ENCODE measurements at regions of chr21 and their contacts with region 1.

Region 1: GRCh38 chr21:44892536-44893277 is 19.2 kb upstream of the PTTG1IP start:
- DNase-seq: peak; percentile 81
- H3K4me3 Mint-ChIP-seq: no peak overlapping the region
- H3K27ac Mint-ChIP-seq: peak overlapping the region; percentile 44
- H3K4me1 Mint-ChIP-seq: peaks cover 12% of the 10 kb centered on the region
- H3K27me3 Mint-ChIP-seq: no peaks in the 10 kb centered on the region

Region 2: DNA sequence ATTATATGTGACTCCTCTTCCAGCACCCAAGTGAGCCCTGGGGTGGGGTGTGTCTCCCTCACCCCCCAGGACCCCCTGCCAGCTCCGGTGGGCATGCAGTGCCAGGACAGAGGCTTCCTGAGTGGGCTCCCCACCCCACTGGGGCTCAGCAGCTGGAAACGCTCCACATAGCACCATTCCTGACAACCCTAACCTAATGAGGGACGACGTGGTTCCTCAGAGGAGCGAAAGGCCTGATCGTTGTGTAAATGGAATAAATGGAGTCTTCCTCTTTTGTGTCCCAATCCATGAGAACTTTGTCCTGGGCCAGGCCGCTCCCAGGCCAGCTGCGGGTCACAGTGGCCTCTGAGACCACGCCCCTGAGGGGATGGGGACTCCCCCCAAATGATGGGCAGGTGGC is 179.6 kb before region 1 on chr21:
- CTCF ChIA-PET with region 1: no interaction called
- POLR2A ChIA-PET with region 1: no interaction called
- DNase-seq: no peak
- H3K4me3 Mint-ChIP-seq: no peak overlapping the region
- H3K27ac Mint-ChIP-seq: no peak overlapping the region
- H3K4me1 Mint-ChIP-seq: peaks cover 8% of the 10 kb centered on the region
- H3K27me3 Mint-ChIP-seq: peaks cover 76% of the 10 kb centered on the region

Region 3: DNA sequence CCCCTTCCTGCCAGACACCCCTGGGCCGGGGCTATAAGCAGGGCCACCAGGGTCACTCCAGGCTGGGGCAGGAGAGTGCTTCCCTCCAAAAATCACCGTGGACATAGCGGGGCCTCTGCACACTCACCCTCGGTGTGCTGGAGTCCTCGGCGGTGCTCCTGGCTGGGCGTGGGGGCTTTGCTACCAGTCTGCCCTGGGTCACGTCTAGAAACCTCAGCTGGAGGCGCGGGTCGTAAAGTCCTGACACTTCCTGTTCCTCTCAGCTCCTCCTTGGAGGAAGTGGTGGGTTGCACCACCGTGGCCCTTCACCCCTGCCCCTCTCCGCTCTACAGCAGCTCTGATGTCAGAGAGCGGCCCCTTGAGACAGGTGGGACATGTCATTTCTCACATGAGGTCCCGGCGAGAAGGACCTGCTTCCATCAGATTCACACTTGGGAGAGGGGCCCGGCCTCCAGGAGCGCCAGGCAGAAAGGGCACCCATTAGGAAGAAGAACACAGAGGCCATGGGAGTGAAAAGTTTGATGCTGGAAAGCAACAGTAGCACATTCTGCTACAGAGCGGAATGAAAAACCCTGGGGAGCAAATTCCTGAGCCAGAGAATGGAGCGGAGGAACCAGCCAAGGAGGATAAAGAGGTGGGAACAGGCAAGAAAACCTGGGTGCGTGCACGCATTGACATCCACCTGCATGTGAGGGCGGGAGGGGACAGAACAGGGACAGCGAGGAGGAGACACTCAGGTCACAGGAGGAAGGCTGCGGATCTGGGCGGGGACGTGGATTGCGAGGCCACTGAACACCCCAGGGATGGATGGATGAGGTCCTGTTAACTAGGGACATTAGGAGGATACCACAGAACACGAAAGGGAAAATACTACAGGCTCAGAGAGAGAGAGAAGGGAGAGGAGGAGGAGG is 28.2 kb after region 1 on chr21 and contains the start of gene ITGB2:
- CTCF ChIA-PET with region 1: interaction called, 12 read pairs
- POLR2A ChIA-PET with region 1: interaction called, 10 read pairs
- DNase-seq: peak; percentile 76
- H3K4me3 Mint-ChIP-seq: peak within 1 kb of the TSS; percentile 100
- H3K27ac Mint-ChIP-seq: peak within 1 kb of the TSS; percentile 88
- H3K4me1 Mint-ChIP-seq: peaks cover 70% of the 10 kb centered on the region
- H3K27me3 Mint-ChIP-seq: no peaks in the 10 kb centered on the region
- total RNA-seq, gene ITGB2: 631 to 642 TPM

Region 4: DNA sequence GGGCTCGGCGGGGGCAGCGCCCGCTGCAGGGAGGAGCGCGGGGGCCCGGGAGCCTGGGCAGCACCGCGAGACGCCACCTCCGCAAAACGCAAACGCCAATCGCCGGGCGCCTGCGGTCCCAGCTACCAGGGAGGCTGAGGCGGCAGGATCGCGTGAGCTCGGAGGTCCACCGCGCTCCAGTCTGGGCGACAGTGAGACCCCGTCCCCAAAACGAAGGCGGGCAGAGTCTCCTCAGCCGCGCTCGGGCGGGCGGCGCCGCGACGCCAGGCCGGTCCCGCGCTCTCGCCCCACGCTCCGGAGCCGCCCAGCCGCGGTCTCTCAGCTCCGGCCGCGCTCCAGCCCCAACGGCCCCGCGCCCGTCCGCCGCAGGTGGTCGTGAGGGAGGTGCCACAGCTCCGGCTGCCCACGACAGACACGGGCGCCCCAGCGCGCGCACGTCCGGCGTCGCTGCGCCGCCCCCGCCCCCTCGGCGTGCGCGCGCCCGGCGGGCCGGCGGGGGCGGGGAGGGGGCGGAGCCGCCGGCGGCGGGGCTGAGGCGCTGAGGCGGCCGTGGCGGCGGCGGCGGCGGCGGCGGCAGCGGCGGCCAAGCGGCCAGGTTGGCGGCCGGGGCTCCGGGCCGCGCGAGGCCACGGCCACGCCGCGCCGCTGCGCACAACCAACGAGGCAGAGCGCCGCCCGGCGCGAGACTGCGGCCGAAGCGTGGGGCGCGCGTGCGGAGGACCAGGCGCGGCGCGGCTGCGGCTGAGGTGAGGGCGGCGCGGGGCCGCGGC is 181.5 kb after region 1 on chr21 and contains the start of gene ADARB1:
- CTCF ChIA-PET with region 1: no interaction called
- POLR2A ChIA-PET with region 1: no interaction called
- DNase-seq: peak; percentile 65
- H3K4me3 Mint-ChIP-seq: peak within 1 kb of the TSS; percentile 90
- H3K27ac Mint-ChIP-seq: peak within 1 kb of the TSS; percentile 72
- H3K4me1 Mint-ChIP-seq: peaks cover 42% of the 10 kb centered on the region
- H3K27me3 Mint-ChIP-seq: no peaks in the 10 kb centered on the region
- total RNA-seq, gene ADARB1: 59.1 to 59.6 TPM